Lower leg skin (tissue), 4 donors: ENCODE measurements at regions of chr22 and their contacts with region 1.

Region 1: DNA sequence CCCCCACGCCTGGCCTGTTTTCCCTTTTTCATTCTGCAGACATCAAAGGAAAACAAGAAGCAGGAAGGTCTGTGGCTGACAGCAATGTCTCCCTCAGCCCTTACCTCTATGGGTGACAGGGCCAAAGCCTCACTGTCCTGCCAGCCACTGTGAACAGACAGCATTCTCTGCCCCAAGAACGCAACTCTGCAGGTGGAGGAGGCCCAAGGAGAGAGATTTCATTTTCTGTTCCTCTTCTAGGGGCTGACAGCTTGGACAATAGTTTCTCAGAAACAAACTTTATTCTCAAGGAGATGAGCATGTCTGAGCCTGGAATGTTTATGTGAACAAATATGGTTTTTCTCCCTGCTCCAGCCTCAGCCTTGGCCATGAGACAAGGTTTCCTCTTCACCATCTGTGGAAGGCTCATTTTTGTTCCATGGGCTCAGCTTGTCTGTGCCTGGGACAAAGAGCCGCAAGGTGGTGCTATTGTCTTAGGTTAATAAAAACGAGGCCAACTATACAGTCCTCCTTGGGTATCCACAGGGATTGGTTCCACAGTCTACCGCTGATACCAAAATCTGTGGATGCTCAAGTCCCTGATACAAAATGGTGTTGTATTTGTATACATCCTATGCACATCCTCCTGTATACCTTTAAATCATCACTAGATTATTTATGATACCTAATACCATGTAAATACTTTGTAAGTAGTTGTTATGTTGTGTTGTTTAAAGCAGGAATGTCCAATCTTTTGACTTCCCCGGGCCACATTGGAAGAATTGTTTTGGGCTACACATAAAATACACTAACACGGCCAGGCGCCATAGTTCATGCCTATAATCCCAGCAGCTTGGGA is 5.8 kb downstream of the PIWIL3 start:
- DNase-seq: peak; percentile 53 to 86
- H3K4me3 ChIP-seq: no peak overlapping the region
- CTCF ChIP-seq: no peak
- POLR2A ChIP-seq: no peak

Region 2: GRCh38 chr22:24834845-24835570 is 66.3 kb after region 1 on chr22:
- intact Hi-C with region 1: loop called (anchors 10 kb)
- DNase-seq: no peak
- H3K4me3 ChIP-seq: no peak overlapping the region
- CTCF ChIP-seq: no peak
- POLR2A ChIP-seq: no peak

Region 3: DNA sequence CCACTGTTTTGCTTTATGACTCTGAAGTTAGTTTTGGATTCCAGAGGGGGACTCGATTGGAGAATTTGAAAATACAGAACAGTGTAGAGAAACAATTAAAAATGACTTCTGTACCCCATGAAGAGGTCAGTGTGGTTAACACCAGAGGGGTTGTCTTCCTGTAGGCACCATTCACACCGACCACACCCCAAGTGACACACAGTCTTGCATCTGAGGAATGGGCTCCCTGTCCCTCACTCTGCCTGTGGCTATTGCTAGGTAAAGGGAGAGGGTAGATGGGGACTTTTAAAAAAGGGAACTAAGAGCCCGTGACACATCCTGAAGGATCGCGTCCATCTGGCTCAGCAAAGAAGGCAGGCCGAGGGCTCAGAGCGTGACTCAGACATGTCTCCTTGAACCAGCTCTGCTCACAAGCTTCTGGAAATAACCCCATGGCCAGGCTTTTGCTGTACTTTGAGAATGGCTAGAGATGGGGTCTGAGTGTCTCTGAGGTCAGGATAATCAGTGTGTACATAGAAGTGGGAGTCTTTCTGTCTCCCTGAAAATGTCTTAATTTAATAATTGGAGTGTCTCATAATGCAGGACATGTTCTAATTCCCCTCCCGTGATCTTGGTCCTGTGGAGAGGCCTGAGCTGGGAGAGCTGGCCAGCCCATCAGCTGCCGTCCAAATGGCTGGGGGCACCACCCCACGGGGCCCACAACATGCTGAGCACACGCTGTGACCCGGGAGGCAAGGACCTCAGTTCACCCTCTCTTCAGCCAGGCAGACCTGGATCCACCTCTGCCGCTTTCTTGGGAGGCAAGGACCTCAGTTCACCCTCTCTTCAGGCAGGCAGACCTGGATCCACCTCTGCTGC is 76.5 kb after region 1 on chr22:
- intact Hi-C with region 1: loop called (anchors 5 kb)
- DNase-seq: peak in 1 of 2 donors; percentile 49
- H3K4me3 ChIP-seq: no peak overlapping the region
- CTCF ChIP-seq: no peak
- POLR2A ChIP-seq: no peak